ENCODE measurements at regions of chr1 and their contacts with region 1.

Region 1: DNA sequence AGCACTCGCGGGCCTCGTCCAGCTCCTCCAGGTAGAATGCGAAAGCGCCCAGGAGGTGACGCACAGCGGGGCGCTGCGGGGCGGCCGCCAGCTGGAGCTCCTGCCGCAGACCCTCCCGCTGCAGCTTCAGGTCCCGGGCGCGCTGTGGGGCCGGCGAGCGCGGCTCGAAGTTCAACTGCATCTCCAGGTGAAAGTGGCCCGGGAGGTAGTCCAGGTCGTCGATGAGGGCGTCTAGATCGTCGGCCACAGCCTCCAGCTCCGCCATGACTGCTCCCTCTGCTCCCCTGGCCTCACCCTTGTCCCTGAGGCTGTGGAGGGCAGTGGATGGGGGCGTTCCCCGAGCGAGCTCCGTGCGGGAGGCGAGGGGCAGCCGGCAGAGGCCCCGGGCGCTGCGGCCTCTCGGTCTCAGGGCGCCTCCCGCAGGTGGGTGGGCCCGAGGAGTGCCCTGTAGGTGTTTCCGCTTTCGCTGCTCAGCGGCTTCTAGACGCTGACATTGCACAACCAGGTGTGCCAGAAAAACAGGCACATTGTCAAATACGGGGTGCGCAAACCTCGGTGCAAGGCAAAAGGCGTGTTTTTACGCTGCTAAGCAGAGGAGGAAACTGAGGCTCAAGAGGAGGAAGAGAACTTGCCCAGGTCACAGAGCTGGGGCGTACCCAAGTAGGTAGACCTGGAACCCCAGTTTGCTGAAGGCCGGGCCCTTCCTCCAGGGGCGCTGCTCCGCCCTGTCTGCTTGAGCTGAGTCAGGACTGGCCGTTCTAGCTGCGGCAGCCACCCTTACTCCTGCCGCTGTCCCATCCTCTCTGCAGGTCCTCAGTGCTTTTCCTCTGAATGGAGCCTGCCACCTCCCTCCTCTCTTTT is at the start of gene TTC22:
- DNase-seq: peak; percentile 73
- ATAC-seq: peak; percentile 79
- H3K4me3 ChIP-seq: peak within 1 kb of the TSS; percentile 74
- H3K27ac ChIP-seq: peak within 1 kb of the TSS; percentile 51
- H3K4me1 ChIP-seq: peaks cover 60% of the 10 kb centered on the region
- H3K27me3 ChIP-seq: no peaks in the 10 kb centered on the region
- CTCF ChIP-seq: peak; percentile 75
- total RNA-seq, gene TTC22: 21.8 and 31.3 TPM in 2 replicates

Region 2: DNA sequence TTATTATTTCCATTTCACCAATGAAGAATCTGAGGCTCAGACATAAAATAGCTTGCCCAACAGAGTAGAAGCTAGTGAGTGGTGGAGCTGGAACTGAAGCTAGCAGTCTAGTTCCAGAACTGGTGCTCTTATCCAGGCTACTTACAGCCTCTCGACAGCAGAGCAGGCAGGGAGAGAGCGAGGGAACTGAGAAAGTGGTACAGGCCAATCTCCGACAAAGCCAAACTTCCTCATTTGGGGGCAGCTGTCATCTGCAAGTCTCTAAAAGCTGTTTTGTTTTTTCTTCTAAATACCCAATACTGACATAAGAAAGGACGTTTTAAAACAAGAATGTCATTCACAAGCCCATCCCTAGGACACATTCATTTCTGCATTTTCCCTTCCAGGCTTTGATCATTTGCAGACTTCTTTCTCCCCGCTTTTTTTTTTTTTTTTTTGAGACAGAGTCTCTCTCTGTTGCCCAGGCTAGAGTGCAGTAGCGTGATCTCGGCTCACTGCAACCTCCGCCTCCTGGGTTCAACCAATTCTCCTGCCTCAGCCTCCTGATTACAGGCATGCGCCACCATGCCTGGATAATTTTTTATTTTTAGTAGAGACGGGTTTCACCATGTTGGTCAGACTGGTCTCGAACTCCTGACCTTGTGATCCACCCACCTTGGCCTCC is 931.5 kb before region 1 on chr1:
- CTCF ChIA-PET with region 1: no interaction called
- POLR2A ChIA-PET with region 1: interaction called, 12 read pairs
- intact Hi-C with region 1: no loop called
- DNase-seq: no peak
- ATAC-seq: no peak
- H3K4me3 ChIP-seq: no peak overlapping the region
- H3K27ac ChIP-seq: no peak overlapping the region
- H3K4me1 ChIP-seq: no peaks in the 10 kb centered on the region
- H3K27me3 ChIP-seq: no peaks in the 10 kb centered on the region
- CTCF ChIP-seq: no peak

Region 3: GRCh38 chr1:54696262-54696661 is 104.9 kb before region 1 on chr1:
- CTCF ChIA-PET with region 1: interaction called, 14 read pairs
- POLR2A ChIA-PET with region 1: no interaction called
- intact Hi-C with region 1: no loop called
- DNase-seq: no peak
- ATAC-seq: no peak
- H3K4me3 ChIP-seq: no peak overlapping the region
- H3K27ac ChIP-seq: no peak overlapping the region
- H3K4me1 ChIP-seq: no peaks in the 10 kb centered on the region
- H3K27me3 ChIP-seq: peaks cover 14% of the 10 kb centered on the region; the same call in 1 of the 2 replicates
- CTCF ChIP-seq: no peak

Region 4: DNA sequence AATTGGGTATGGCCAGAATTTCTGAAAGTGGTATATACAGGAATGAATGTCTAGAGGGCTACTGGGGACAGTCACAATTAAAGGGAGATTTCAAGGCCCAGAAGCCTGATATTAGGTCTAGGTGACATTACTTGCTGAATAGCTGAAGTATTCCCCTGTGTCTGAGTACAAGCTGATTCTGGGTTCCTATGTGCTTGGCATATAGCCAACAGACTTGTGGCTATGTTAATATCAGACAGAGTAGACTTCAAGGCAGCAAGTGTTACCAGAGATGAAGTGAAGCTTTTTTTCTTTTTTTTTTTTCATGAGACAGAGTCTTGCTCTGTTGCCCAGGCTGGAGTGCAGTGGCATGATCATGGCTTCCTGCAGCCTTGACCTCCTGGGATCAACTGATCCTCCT is 77.2 kb before region 1 on chr1:
- CTCF ChIA-PET with region 1: no interaction called
- POLR2A ChIA-PET with region 1: no interaction called
- intact Hi-C with region 1: no loop called
- DNase-seq: no peak
- ATAC-seq: no peak
- H3K4me3 ChIP-seq: no peak overlapping the region
- H3K27ac ChIP-seq: no peak overlapping the region
- H3K4me1 ChIP-seq: no peaks in the 10 kb centered on the region
- H3K27me3 ChIP-seq: no peaks in the 10 kb centered on the region
- CTCF ChIP-seq: no peak

Region 5: GRCh38 chr1:54781023-54781723 is 20.0 kb before region 1 on chr1:
- CTCF ChIA-PET with region 1: no interaction called
- POLR2A ChIA-PET with region 1: no interaction called
- intact Hi-C with region 1: no loop called
- DNase-seq: no peak
- ATAC-seq: no peak
- H3K4me3 ChIP-seq: no peak overlapping the region
- H3K27ac ChIP-seq: no peak overlapping the region
- H3K4me1 ChIP-seq: no peaks in the 10 kb centered on the region
- H3K27me3 ChIP-seq: no peaks in the 10 kb centered on the region
- CTCF ChIP-seq: no peak

Region 6: GRCh38 chr1:55164906-55165305 is 363.8 kb after region 1 on chr1:
- CTCF ChIA-PET with region 1: no interaction called
- POLR2A ChIA-PET with region 1: no interaction called
- intact Hi-C with region 1: no loop called
- DNase-seq: no peak
- ATAC-seq: no peak
- H3K4me3 ChIP-seq: no peak overlapping the region
- H3K27ac ChIP-seq: no peak overlapping the region
- H3K4me1 ChIP-seq: no peaks in the 10 kb centered on the region
- H3K27me3 ChIP-seq: no peaks in the 10 kb centered on the region
- CTCF ChIP-seq: no peak